Heart right ventricle (tissue), 16 donors: ENCODE measurements at regions of chr1 and their contacts with region 1.

Region 1: GRCh38 chr1:59408608-59409240 is 111.8 kb downstream of the FGGY start:
- DNase-seq: no peak
- ATAC-seq: no peak
- H3K4me3 ChIP-seq: no peak overlapping the region
- H3K27ac ChIP-seq: peak overlapping the region in 3 of 10 donors; percentile 2 to 32 (median 23)
- H3K4me1 ChIP-seq: peaks cover 0 to 10% (median 3%) of the 10 kb centered on the region in 9 donors
- H3K27me3 ChIP-seq: no peaks in the 10 kb centered on the region
- CTCF ChIP-seq: no peak

Region 2: GRCh38 chr1:59422921-59423575 is 14.3 kb after region 1 on chr1:
- intact Hi-C with region 1: loop called in 1 of 10 experiments (anchors 2 kb)
- DNase-seq: peak; percentile 31 to 72
- ATAC-seq: peak; percentile 45 to 78 (median 68)
- H3K4me3 ChIP-seq: no peak overlapping the region
- H3K27ac ChIP-seq: peak overlapping the region in 2 of 10 donors; percentile 1 to 13
- H3K4me1 ChIP-seq: peaks cover 0 to 35% (median 14%) of the 10 kb centered on the region in 9 donors
- H3K27me3 ChIP-seq: no peaks in the 10 kb centered on the region
- CTCF ChIP-seq: no peak